Activated T-helper 1 cell treated with anti-CD3 and anti-CD28 coated beads, Interleukin-12 subunit alpha, Interleukin-12 subunit beta, Interleukin-2, Interleukin-4 antibody, amounts not matched to agents 30 ng/mL and 10 ng/mL and 1 ng/mL, durations not matched to agents 14 hours and 24 hours and 36 hours (primary cell): ENCODE measurements at regions of chr2 and their contacts with region 1.

Region 1: GRCh38 chr2:99180755-99181623 is at the starts of genes MITD1 and MRPL30:
- DNase-seq: peak; percentile 90
- H3K4me3 Mint-ChIP-seq: peak within 1 kb of the TSS; percentile 99
- H3K27ac Mint-ChIP-seq: peak within 1 kb of the TSS; percentile 96
- H3K4me1 Mint-ChIP-seq: peaks cover 36% of the 10 kb centered on the region
- H3K27me3 Mint-ChIP-seq: no peaks in the 10 kb centered on the region
- total RNA-seq, gene MITD1: 45.3 and 50.1 TPM in 2 replicates
- total RNA-seq, gene MRPL30: 25.5 and 27.8 TPM in 2 replicates

Region 2: DNA sequence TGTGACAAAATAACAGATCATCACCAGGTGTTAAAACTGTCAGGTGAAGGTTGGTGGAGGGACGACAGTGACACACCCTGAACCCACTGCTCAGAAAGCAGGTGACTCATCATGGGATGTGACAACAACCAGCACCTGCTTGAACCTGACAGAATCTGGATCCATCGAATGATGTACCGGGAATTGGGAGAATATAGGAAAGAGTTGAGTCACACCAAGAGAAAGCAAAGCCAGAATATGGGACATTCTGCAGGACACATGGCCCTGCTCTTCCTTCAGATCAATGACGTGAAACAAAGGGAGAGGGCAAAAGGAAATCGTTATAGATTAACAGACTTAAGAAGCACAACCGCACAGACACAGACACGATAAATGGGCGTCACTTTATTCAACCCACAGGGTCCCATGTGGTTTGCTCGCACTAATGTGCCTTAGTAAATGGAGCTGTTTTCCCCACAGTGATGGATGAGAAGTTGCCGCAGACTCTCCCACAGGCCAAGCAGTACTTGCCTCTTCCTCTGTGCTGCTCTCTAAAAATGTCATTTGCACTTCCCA is 345.1 kb before region 1 on chr2:
- intact Hi-C with region 1: loop called (anchors 5 kb)
- DNase-seq: peak; percentile 24
- H3K4me3 Mint-ChIP-seq: peak overlapping the region; percentile 38
- H3K27ac Mint-ChIP-seq: peak overlapping the region; percentile 56
- H3K4me1 Mint-ChIP-seq: peaks cover 53% of the 10 kb centered on the region
- H3K27me3 Mint-ChIP-seq: peaks cover 6% of the 10 kb centered on the region

Region 3: GRCh38 chr2:99085421-99085820 is 95.6 kb before region 1 on chr2:
- intact Hi-C with region 1: loop called (anchors 1 kb)
- DNase-seq: no peak
- H3K4me3 Mint-ChIP-seq: no peak overlapping the region
- H3K27ac Mint-ChIP-seq: no peak overlapping the region
- H3K4me1 Mint-ChIP-seq: no peaks in the 10 kb centered on the region
- H3K27me3 Mint-ChIP-seq: peaks cover 19% of the 10 kb centered on the region

Region 4: DNA sequence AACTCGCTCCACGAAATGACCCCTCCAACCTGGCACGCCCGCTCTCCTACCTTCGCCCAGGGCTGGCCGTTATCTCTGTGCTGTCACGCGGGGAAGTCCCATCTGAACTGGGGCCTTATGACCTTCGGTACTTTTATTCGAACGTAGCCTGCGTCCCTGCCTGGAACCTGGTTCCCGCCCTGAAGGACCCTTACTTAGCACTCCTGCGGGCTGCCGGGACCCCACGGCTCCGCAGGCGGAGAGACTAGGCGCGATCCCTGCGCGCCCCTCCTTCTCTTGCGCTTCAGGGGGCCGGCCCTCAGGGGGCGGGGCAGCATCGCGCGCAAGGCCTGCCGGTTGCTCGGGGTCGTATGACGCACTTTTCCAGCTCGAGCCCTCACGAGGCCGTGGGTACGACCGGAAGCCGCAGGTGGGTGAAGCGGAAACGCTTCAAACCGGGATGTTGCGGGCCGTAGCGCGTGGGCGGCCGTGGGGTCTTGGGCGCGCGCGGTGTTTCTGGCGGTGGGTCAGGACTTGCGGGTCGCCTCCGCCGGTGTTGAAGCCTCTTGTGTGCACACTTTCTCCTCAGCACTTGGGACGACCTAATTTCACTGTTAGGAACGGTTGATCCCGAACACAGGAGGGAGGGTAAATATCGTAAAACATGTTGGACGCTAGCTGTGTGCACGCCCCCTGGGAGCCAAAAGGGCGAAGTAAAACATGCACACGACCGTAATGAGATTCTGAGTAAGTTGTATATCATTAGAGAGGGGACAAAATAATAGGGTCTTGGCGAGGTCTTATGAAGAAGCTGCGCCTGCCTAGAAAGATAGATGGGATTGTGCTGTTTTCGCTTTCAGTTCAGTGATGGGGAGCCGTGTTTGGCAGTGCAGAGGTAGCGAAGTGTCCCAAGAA is 26.1 kb before region 1 on chr2 and contains the starts of genes LIPT1 and TSGA10:
- intact Hi-C with region 1: loop called (anchors 1 kb)
- DNase-seq: peak; percentile 92
- H3K4me3 Mint-ChIP-seq: no peak within 1 kb of the TSS
- H3K27ac Mint-ChIP-seq: peak within 1 kb of the TSS; percentile 95
- H3K4me1 Mint-ChIP-seq: peaks cover 31% of the 10 kb centered on the region
- H3K27me3 Mint-ChIP-seq: no peaks in the 10 kb centered on the region
- total RNA-seq, gene LIPT1: 2.2 and 3.3 TPM in 2 replicates
- total RNA-seq, gene TSGA10: 3.0 and 4.1 TPM in 2 replicates

Region 5: GRCh38 chr2:99169534-99169933 is 11.5 kb before region 1 on chr2:
- intact Hi-C with region 1: no loop called
- DNase-seq: no peak
- H3K4me3 Mint-ChIP-seq: no peak overlapping the region
- H3K27ac Mint-ChIP-seq: no peak overlapping the region
- H3K4me1 Mint-ChIP-seq: peaks cover 26% of the 10 kb centered on the region
- H3K27me3 Mint-ChIP-seq: no peaks in the 10 kb centered on the region

Region 6: DNA sequence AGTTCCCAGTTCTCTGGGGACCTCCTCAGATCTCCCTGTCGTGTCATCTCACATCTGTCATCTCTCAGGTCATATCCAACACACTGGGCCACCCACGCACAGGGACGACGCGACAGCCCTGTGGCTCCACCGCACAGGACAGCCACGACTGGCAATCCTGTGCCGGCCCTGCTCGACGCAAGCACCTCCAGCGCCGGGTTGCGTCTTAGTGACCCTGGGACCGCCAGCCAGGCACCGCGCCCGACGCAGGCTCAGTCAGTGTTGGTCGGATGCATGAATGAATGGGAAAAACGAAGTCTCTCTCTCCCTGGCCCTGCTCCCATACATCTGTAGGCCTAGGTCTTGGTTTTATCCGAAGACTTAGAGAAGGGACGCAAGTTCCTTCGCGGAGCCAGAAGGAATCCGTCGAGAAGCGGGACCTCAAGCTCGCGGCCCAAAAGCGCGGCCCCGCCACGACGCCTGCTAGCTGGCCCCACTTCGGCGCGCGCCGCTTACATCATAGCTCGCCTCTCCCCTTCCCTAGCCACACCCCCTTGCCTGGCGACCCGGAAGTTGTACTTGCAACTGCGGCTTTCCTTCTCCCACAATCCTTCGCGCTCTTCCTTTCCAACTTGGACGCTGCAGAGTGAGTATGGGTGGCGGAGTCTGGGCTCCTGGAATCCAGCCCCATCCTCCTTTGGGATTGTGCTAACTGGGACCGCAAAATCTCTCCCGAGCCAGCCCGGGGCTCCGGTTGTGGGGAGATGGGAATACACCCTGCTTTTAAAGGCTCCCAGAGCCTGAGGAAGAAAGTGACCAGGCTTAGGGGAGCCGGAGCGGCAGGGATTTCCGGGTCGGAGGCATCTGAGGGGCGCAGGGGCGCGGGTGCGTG is 1820.9 kb after region 1 on chr2 and contains the start of gene RPL31:
- intact Hi-C with region 1: loop called (anchors 10 kb)
- DNase-seq: peak; percentile 95
- H3K4me3 Mint-ChIP-seq: peak within 1 kb of the TSS; percentile 100
- H3K27ac Mint-ChIP-seq: peak within 1 kb of the TSS; percentile 95
- H3K4me1 Mint-ChIP-seq: peaks cover 46% of the 10 kb centered on the region
- H3K27me3 Mint-ChIP-seq: peaks cover 6% of the 10 kb centered on the region
- total RNA-seq, gene RPL31: 1,048 and 1,092 TPM in 2 replicates